ENCODE measurements at regions of chr3 and their contacts with region 1.

Region 1: DNA sequence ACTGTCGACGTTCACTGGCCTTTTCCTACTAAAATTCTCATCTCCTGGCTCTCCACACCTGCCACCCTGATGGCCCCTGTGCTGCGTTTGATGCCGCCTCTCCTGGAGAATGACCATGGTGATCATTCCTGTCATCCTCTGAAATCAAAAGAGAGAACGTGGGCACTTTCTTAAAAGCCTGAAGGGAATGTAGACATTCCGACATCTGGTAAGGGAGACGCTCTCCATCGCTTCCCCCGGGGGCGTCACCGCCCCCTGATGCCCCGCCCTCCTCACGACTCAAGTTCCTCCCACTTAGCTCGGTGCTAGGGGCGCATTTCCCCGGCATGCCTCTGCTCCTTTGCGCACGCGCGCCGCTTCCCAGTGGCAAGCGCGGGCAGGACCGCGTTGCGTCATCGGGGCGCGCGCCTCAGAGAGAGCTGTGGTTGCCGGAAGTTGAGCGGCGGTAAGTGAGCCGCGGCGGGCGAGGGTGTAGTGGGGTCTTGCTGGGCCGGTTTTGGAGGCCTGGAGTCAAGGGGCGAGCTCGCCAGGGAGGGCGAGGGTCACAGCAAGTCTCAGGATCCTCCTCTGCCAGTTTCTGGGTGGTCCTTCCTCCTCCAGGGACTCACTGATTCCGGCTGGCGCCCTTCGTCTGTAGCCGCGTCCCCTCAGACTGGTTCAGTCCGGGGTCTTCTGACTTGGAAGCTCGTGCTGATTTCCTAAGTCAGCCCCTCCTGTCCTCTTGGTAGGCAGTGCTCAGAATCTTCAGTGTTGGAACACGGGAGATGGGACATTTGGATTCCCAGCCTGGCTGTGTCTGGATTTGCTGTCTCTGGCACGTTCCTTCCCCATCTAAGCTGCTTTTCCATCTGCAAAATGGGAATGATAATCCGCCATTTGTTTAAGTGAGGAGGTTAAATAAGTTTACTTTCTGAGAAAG is at the start of gene ATG7:
- DNase-seq: peak; percentile 95 to 97
- H3K4me3 ChIP-seq: peak within 1 kb of the TSS; percentile 89
- H3K4me3 Mint-ChIP-seq: peak within 1 kb of the TSS; percentile 91
- H3K27ac Mint-ChIP-seq: peak within 1 kb of the TSS; percentile 93
- H3K4me1 ChIP-seq: peaks cover 4% of the 10 kb centered on the region; the same call in 1 of the 2 replicates
- H3K4me1 Mint-ChIP-seq: peaks cover 12% of the 10 kb centered on the region
- H3K27me3 ChIP-seq: no peaks in the 10 kb centered on the region
- H3K27me3 Mint-ChIP-seq: peaks cover 2% of the 10 kb centered on the region
- CTCF ChIP-seq: no peak
- total RNA-seq, gene ATG7: 24.4 and 28.6 TPM in 2 replicates

Region 2: DNA sequence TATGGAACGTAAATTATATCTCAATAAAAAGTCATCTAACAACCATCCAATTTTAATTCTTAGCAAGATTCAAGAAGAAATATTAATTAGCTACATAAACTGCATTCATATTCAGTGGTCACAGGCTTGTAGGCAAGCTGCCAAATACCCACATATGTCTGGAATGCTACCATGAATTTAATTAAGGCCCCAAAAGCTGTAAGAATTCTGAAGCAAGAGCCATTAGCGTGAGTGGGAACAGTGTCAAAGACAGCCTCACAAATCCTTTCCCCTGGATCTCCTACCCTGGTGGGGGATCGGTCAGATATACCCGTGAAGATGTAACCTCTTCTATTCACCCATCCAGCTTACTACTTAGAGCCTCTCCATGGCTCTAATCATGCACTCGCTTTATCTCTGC is 39.9 kb after region 1 on chr3:
- CTCF ChIA-PET with region 1: no interaction called
- POLR2A ChIA-PET with region 1: interaction called, 8 read pairs
- intact Hi-C with region 1: loop called (anchors 1 kb)
- DNase-seq: no peak
- H3K4me3 ChIP-seq: no peak overlapping the region
- H3K4me3 Mint-ChIP-seq: no peak overlapping the region
- H3K27ac Mint-ChIP-seq: no peak overlapping the region
- H3K4me1 ChIP-seq: no peaks in the 10 kb centered on the region
- H3K4me1 Mint-ChIP-seq: no peaks in the 10 kb centered on the region
- H3K27me3 ChIP-seq: no peaks in the 10 kb centered on the region
- H3K27me3 Mint-ChIP-seq: no peaks in the 10 kb centered on the region
- CTCF ChIP-seq: no peak

Measured in Caco-2 (cell line).